H1 (cell line): ENCODE measurements at regions of chr9 and their contacts with region 1.

Region 1: DNA sequence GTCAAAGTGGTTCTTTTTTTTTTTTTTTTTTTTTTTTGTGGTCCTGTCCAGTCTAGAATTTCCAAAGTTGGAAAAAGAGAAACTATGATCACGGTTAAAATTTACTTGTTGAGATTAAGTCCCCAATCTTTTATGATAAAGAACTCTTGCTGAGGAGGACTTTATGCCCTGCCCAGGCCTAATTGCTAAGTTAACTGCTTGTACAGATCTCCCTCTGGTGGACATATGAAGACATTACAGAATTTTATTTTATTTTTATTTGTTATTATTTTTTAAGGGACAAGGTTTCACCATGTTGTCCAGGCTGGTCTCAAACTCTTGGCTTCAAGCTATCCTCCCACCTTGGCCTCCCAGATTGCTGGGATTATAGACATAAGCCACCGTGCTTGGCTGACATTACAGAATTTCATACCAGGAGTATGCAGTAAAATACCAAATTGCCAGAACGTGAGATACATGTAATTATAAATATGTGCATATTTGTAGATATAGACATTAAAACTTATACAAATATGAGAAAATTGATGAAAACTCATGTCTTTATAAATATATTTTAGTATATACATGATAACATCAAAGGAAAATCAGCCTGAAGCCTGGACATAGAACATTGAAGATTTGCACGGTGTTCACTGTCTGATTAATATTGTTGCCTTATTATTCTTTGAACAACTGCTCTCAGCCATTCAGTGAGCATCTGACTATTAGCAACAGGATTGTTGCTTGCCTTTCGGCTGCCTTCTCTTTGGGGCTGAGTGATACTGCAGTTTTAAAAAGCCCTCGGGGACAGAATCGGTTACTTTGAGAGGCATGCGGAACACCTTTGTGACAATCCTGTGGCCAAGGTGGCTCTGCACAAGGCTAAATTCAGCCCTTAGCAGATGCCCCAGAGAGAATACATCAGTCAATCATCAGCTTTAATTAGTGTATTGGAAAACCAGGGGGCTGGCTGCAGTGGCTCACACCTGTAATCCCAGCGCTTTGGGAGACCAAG is 91.0 kb downstream of the RFK start:
- DNase-seq: no peak
- H3K4me3 ChIP-seq: no peak overlapping the region
- H3K27ac ChIP-seq: no peak overlapping the region
- H3K4me1 ChIP-seq: no peaks in the 10 kb centered on the region; a peak in 2 of 7 replicates
- H3K27me3 ChIP-seq: no peaks in the 10 kb centered on the region
- CTCF ChIP-seq: peak in 2 of 3 experiments; percentile 32 to 58; a peak in 2 of 4 replicates
- EP300 ChIP-seq: no peak
- POLR2A ChIP-seq: no peak
- RAD21 ChIP-seq: peak; percentile 82 to 87

Region 2: GRCh38 chr9:76018235-76018634 is 285.0 kb before region 1 on chr9:
- CTCF ChIA-PET with region 1: no interaction called
- POLR2A ChIA-PET with region 1: no interaction called
- DNase-seq: no peak
- H3K4me3 ChIP-seq: no peak overlapping the region
- H3K27ac ChIP-seq: no peak overlapping the region
- H3K4me1 ChIP-seq: peaks cover 0 to 18% (median 9%) of the 10 kb centered on the region in 4 experiments; a peak in 4 of 7 replicates
- H3K27me3 ChIP-seq: peaks cover 0 to 2% (median 0%) of the 10 kb centered on the region in 4 experiments; a peak in 2 of 7 replicates
- CTCF ChIP-seq: no peak
- EP300 ChIP-seq: no peak
- POLR2A ChIP-seq: no peak
- RAD21 ChIP-seq: no peak

Region 3: DNA sequence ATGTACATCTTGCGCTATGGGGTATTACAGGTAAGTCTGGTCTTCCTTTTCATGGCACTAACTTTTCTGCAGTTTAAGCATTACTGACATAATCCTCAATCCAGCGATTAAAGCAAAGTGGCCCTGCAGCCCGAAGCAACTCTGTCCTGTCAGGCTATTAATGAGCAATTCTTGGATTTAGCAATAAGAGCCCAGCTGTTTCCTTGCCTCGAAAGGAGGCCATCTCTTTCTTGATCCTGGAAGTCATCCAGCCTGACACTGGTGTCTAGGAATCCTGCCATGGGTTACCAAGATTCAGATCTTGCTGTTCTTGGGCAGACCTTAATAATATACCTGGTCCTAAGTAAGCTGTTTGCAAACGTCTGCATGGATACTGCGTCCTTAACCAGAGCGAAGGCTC is 11.0 kb before region 1 on chr9:
- CTCF ChIA-PET with region 1: interaction called, 64 read pairs
- POLR2A ChIA-PET with region 1: interaction called, 3 read pairs
- DNase-seq: no peak
- H3K4me3 ChIP-seq: no peak overlapping the region
- H3K27ac ChIP-seq: no peak overlapping the region
- H3K4me1 ChIP-seq: no peaks in the 10 kb centered on the region
- H3K27me3 ChIP-seq: no peaks in the 10 kb centered on the region
- CTCF ChIP-seq: no peak
- EP300 ChIP-seq: no peak
- POLR2A ChIP-seq: no peak
- RAD21 ChIP-seq: no peak

Region 4: DNA sequence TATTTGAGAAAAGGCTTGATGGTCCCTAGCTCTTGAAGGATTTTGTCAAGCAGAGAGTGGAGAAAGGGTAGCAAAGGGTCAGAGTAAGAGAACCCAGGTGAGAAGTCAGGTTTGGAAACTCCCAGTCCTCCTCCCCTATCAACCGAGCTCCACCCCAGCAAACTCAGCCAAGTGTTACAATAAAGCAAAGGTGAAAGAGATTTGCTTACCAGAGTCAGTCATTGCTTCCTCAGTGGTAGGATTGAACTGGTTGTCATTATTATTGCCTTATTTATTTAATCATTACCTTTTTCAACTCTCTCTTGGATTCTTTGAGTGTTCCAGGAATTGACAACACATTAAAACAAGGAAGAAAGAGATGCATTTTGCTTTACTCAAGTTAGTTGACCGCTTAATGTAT is 10.5 kb after region 1 on chr9:
- CTCF ChIA-PET with region 1: interaction called, 16 read pairs
- POLR2A ChIA-PET with region 1: interaction called, 3 read pairs
- DNase-seq: no peak
- H3K4me3 ChIP-seq: no peak overlapping the region
- H3K27ac ChIP-seq: no peak overlapping the region
- H3K4me1 ChIP-seq: no peaks in the 10 kb centered on the region
- H3K27me3 ChIP-seq: no peaks in the 10 kb centered on the region
- CTCF ChIP-seq: no peak
- EP300 ChIP-seq: no peak
- POLR2A ChIP-seq: no peak
- RAD21 ChIP-seq: no peak

Region 5: DNA sequence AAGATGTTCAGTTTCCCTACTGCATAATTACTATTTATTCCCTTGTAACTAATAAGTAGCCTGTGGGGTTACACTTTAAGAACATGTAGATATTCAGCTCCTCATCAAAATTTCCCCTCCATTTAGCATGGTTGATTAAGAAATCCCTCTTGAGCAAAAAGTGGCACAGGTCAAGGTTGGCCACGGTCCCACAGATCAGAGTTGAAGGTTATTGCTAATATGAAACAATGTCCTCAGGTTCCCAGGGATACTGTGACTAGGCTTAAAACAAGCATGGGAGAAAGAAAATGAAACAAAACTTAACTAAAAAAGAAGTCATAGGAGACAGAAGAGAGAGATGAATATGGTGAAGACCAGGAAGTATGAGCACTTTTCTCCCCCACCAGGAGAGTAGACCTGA is 26.8 kb after region 1 on chr9:
- CTCF ChIA-PET with region 1: no interaction called
- POLR2A ChIA-PET with region 1: no interaction called
- DNase-seq: no peak
- H3K4me3 ChIP-seq: no peak overlapping the region
- H3K27ac ChIP-seq: no peak overlapping the region
- H3K4me1 ChIP-seq: no peaks in the 10 kb centered on the region
- H3K27me3 ChIP-seq: no peaks in the 10 kb centered on the region
- CTCF ChIP-seq: no peak
- EP300 ChIP-seq: no peak
- POLR2A ChIP-seq: no peak
- RAD21 ChIP-seq: no peak